ENCODE measurements at regions of chr2 and their contacts with region 1.

Region 1: DNA sequence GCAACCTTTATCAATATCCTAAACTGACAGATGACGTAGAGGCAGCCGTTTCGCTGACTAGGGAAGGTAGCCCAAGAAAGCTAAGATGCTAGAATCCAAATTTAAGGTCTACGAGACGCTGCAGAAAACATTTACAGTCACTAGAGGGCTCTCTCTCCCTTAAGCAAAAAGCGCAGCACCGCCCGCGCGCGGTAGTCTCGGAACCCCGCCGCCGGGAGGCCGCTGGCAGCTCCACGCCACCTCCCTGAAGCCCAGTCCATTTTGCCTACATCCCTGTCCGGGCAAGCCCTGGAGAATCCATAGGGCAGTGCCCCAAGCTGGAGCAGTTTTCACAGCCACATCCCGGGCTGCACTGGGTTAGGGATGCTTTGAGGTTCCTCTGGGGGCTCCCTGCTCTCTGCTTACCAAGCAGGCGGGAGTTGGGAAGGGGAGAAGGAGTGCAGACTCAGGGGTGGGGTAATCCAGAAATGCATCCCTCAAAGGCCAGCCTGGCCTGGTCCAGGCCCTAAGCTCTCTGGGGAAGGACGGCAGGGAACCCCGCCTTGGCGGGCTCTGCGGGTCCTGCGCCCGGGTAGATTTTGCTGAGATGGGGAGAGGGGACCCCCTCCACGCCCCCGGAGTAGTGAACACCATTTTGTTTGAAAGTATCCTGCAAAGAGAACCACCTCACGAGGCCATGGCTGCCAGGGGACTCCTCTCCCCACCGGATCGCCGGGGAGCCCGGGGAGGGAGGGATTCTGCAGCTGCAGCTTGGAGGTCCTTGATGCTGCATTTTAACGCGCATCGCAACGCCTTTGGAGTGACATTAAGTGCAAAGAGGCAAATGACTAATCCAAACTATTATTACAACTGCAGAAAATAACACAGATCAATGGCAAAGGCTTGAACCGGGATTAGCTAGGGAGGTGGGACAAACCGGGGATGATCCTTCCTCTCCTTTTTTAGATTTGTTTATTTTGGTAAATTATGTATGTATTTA is 1.3 kb upstream of the DPYSL5 start:
- DNase-seq: peak; percentile 77
- ATAC-seq: peak; percentile 81
- H3K4me3 Mint-ChIP-seq: peak overlapping the region; percentile 35
- H3K27ac Mint-ChIP-seq: no peak overlapping the region
- H3K4me1 Mint-ChIP-seq: peaks cover 9% of the 10 kb centered on the region
- H3K27me3 Mint-ChIP-seq: peaks cover 46% of the 10 kb centered on the region
- CTCF ChIP-seq: peak; percentile 80

Region 2: DNA sequence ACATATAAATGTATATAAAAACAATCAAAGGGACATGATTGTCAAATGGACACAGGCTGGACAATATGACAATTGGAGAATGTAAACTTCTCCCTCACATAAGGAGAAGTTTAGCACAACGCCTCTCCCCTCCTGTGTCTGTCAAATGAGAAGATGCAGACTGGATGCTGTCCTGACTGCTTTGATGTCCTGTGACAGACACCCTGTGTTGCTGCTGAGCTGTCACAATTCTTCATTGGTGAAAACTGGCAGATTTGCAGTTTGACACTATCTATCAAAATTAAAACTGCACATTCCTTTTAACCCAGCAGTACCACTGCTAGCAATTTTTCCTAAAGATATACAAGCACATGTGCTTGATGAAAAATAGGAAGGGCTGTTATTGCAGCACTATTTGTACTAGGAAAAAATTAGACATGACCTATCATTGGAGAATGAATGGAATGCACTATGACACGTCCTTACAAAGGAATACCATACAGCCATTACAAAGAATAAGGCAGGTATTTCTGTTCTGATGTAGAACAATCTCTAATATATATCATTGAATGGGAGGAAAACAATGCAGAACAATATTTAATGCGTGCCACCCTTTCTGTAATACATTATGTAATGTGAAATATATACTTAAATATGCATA is 13.7 kb after region 1 on chr2:
- CTCF ChIA-PET with region 1: interaction called, 25 read pairs
- POLR2A ChIA-PET with region 1: interaction called, 3 read pairs
- intact Hi-C with region 1: no loop called
- DNase-seq: no peak
- ATAC-seq: no peak
- H3K4me3 Mint-ChIP-seq: no peak overlapping the region
- H3K27ac Mint-ChIP-seq: no peak overlapping the region
- H3K4me1 Mint-ChIP-seq: no peaks in the 10 kb centered on the region
- H3K27me3 Mint-ChIP-seq: peaks cover 8% of the 10 kb centered on the region
- CTCF ChIP-seq: no peak

Region 3: DNA sequence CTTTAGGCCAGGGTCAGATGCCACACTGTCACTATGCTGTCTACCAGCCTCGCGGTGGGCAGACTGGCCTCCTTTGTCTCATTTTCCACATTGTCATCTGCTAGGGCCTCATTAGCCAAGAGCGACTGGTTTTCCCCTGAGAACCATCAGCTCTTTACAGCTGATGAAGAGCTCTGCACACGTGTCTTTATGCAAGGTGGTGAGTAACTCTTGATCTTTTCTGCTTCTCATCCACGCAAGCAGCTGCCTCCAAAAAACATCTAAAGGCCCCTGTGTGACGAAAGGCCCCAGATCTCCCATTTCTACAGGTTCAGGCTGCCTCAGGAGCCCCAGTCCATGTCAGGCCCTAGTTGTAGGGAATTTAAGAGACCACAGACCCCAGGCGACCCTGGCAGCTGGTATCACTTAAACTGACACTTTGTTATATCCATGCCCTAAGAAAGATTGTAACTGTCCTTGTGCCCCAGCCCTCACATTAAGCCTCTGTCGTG is 54.3 kb after region 1 on chr2:
- CTCF ChIA-PET with region 1: interaction called, 15 read pairs
- POLR2A ChIA-PET with region 1: interaction called, 5 read pairs
- intact Hi-C with region 1: no loop called
- DNase-seq: no peak
- ATAC-seq: no peak
- H3K4me3 Mint-ChIP-seq: no peak overlapping the region
- H3K27ac Mint-ChIP-seq: no peak overlapping the region
- H3K4me1 Mint-ChIP-seq: no peaks in the 10 kb centered on the region
- H3K27me3 Mint-ChIP-seq: peaks cover 2% of the 10 kb centered on the region
- CTCF ChIP-seq: no peak

Region 4: DNA sequence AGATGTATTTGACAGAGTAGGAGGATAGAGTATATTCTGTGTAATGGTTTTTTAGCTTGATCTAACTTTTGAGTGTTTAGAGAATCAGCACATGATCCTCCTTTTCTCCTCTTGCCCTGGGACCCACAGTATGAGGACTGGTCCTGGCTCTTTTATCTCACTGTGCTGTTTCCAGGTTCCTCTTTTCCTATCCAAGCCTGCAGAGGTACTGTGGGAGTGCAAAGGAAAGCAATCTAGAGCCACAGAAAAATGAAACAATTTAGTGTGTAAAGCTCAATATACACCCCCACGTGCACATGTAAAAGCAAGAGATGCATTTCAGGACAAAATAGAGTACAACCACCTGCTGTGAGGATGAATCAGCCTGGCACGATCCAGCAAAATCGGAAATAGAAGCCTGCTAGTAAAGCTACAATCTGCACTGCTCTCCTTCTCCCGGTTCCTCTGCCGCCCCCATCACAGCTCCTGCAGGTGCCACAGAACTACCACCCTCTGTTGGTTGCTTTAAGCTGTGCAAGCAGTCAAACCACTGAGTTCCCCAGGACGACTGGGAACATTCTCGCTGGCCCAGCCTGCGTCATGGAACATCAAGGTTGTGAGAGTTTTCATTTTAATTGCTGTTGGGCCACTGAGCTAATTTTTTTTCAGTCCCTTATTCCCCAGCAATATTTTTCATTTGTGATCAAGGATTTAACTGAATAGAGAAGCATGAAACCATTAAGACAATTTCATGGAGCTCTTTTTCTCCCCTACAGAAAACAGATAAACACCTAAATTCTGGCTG is 76.0 kb after region 1 on chr2:
- CTCF ChIA-PET with region 1: interaction called, 117 read pairs
- POLR2A ChIA-PET with region 1: no interaction called
- intact Hi-C with region 1: loop called (anchors 5 kb)
- DNase-seq: peak; percentile 66
- ATAC-seq: peak; percentile 87
- H3K4me3 Mint-ChIP-seq: no peak overlapping the region
- H3K27ac Mint-ChIP-seq: no peak overlapping the region
- H3K4me1 Mint-ChIP-seq: peaks cover 11% of the 10 kb centered on the region
- H3K27me3 Mint-ChIP-seq: peaks cover 8% of the 10 kb centered on the region
- CTCF ChIP-seq: peak; percentile 76

Region 5: DNA sequence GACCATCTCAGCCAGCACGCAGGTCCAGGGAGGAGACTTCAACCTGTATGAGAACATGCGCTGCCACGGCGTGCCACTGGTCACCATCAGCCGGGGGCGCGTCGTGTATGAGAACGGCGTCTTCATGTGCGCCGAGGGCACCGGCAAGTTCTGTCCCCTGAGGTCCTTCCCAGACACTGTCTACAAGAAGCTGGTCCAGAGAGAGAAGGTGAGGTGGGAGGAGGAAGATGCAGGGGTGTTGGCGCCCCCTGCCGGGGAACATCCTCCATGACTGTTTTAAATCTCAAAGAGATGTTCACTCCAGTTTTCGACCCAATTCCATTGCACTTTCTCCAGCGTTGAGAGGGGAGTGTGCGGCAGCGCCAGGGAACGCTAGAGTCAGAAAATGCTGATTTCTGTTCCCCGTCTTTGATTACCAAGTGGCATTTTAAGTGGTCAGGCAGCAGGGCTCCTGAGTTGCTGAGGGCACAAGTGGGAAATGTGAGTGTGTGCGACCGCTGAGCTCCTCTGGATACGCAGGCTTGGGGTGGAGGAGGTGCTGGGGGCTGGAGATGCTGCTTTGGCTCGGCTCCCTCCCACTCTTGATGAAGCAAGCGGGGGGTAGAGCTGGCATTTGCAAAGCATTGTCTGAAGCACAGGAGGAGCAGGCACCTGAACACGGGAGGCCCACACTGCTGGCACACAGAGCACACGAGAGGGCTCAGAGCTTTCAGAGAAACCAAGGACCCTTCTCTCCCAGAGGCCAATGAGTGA is 96.1 kb after region 1 on chr2:
- CTCF ChIA-PET with region 1: interaction called, 156 read pairs
- POLR2A ChIA-PET with region 1: no interaction called
- intact Hi-C with region 1: loop called (anchors 2 kb)
- DNase-seq: peak; percentile 84
- ATAC-seq: peak; percentile 69
- H3K4me3 Mint-ChIP-seq: no peak overlapping the region
- H3K27ac Mint-ChIP-seq: no peak overlapping the region
- H3K4me1 Mint-ChIP-seq: peaks cover 2% of the 10 kb centered on the region
- H3K27me3 Mint-ChIP-seq: peaks cover 5% of the 10 kb centered on the region
- CTCF ChIP-seq: peak; percentile 86

Region 6: DNA sequence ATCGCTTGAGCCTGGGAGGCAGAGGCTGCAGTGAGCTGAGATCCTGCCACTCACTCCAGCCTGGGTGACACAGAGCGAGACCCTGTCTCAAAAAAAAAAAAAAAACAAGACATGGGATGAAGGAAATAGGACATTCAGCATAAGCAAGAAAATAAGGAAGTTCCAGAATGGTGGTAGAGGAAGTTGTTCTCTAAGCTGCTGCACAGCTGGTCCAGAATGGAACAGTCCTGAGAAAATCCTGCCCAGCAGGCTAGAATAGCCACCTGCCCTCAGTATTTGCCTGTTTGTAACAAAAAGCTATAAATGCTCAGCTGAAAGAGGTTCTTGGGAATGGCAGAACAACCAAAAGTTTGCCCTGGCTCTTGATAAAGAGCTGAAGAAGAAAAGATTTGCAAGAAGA is 112.7 kb after region 1 on chr2:
- CTCF ChIA-PET with region 1: interaction called, 29 read pairs
- POLR2A ChIA-PET with region 1: no interaction called
- intact Hi-C with region 1: no loop called
- DNase-seq: no peak
- ATAC-seq: no peak
- H3K4me3 Mint-ChIP-seq: no peak overlapping the region
- H3K27ac Mint-ChIP-seq: no peak overlapping the region
- H3K4me1 Mint-ChIP-seq: no peaks in the 10 kb centered on the region
- H3K27me3 Mint-ChIP-seq: peaks cover 18% of the 10 kb centered on the region
- CTCF ChIP-seq: no peak

Region 7: GRCh38 chr2:27016801-27017325 is 170.2 kb after region 1 on chr2:
- CTCF ChIA-PET with region 1: interaction called, 17 read pairs
- POLR2A ChIA-PET with region 1: no interaction called
- intact Hi-C with region 1: loop called (anchors 10 kb)
- DNase-seq: peak; percentile 75
- ATAC-seq: peak; percentile 77
- H3K4me3 Mint-ChIP-seq: no peak overlapping the region
- H3K27ac Mint-ChIP-seq: no peak overlapping the region
- H3K4me1 Mint-ChIP-seq: peaks cover 2% of the 10 kb centered on the region
- H3K27me3 Mint-ChIP-seq: no peaks in the 10 kb centered on the region
- CTCF ChIP-seq: peak; percentile 63